ENCODE measurements at regions of chr17 and their contacts with region 1.

Region 1: DNA sequence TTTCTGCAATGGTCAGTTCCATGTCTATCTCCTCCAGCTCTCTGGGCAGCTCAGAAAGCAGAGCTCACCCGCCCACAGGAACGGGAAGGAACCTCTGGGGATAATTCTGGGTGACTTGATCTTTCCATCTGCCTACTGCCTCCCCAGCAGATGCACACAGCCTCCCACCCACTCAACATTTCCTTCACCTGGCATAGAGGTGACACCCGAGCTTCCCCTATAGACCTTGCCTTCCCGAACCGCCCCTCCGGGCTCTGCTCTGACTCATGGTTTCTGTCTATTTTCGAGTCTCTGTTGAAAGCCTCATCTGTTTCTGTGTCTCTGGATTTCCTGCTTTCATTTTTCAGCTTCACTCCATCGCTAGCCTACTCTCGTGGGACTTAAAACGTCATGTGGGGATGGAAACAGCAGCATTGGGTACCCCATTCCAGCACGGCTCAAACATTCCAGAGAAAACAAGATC is 11.4 kb downstream of the GGA3 start:
- DNase-seq: no peak
- ATAC-seq: peak; percentile 52 to 77
- H3K4me3 ChIP-seq: peak overlapping the region in 2 of 4 donors; percentile 10 to 22
- H3K27ac ChIP-seq: peak overlapping the region; percentile 46 to 59 (median 50)
- H3K4me1 ChIP-seq: peaks cover 18 to 20% of the 10 kb centered on the region in 2 donors
- H3K27me3 ChIP-seq: no peaks in the 10 kb centered on the region
- CTCF ChIP-seq: no peak
- POLR2A ChIP-seq: no peak

Region 2: GRCh38 chr17:74513987-74514631 is 735.9 kb before region 1 on chr17:
- in situ Hi-C with region 1: no loop called
- intact Hi-C with region 1: no loop called
- DNase-seq: peak in 1 of 2 donors; percentile 28
- ATAC-seq: peak; percentile 5 to 22
- H3K4me3 ChIP-seq: no peak overlapping the region
- H3K27ac ChIP-seq: peak overlapping the region in 1 of 4 donors; percentile 80
- H3K4me1 ChIP-seq: peaks cover 13 to 19% of the 10 kb centered on the region in 2 donors
- H3K27me3 ChIP-seq: no peaks in the 10 kb centered on the region
- CTCF ChIP-seq: peak in 2 of 5 experiments; percentile 34
- POLR2A ChIP-seq: no peak

Region 3: GRCh38 chr17:75277664-75278071 is 27.6 kb after region 1 on chr17:
- in situ Hi-C with region 1: no loop called
- intact Hi-C with region 1: loop called (anchors 1 kb)
- DNase-seq: no peak
- ATAC-seq: no peak
- H3K4me3 ChIP-seq: no peak overlapping the region
- H3K27ac ChIP-seq: no peak overlapping the region
- H3K4me1 ChIP-seq: peaks cover under 1 to 2% of the 10 kb centered on the region in 2 donors
- H3K27me3 ChIP-seq: no peaks in the 10 kb centered on the region
- CTCF ChIP-seq: no peak
- POLR2A ChIP-seq: no peak